GM10248 (cell line): ENCODE measurements at regions of chr14 and their contacts with region 1.

Region 1: DNA sequence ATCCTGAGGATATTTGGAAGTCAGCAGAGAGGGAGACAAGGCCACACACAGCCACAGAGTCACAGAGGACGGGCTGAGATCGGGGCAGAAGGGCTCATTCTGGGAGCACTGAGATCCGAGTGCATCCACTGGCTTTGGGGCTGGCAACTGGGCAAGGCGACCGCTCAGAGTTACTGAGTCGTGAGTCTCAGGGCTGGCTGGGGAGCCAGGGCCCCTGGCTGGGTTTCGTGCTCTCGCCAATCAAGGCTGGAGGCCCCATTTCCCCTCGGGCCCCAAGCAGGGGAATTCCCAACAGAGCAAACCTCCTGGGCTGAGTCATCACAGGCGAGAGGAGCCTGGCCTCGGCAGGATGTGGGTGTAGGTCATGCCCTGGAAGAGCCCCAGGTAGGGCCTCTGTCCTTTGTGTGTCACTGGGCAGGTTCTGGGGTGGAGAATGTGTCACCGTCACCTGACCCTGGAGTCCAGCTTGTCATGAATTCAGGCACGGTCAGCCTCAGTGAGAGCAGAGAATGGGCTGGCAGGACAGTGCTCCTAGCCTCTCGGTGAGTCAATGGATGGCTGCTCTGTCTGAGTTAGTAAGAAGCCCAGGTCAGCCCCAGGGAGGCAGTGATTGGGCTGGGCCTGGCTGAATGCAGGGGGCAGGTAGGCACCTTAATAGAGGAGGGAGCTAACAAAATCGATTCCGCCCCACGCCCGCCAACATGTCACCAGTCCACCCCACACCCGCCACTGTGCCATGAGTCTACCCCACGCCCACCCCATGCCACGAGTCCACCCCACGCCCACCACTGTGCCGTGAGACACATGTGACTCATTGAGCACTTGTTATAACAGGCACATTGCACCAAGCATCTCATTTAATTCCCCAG is 16.9 kb downstream of the ASB2 start:
- DNase-seq: peak; percentile 93
- CTCF ChIP-seq: no peak

Region 2: DNA sequence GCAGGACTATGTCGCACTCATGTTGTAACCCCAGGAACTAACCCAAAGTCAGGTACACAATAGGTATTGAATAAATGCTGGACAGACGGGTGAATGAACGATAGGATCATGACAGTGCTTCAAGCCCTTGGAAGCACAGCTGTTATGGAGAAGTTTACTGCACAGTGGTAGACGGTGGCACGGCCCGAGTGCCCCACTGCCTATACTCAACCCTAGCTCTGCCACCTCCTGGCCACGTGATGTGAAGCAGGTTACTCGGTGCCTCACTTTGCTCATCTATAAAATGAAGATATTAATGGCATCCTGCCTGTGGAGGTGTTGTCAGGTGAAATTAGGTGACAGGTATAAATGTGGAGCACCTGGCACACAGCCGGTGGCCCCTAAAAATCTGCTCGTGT is 11.1 kb after region 1 on chr14:
- CTCF ChIA-PET with region 1: interaction called, 48 read pairs
- POLR2A ChIA-PET with region 1: interaction called, 18 read pairs
- DNase-seq: no peak
- CTCF ChIP-seq: peak; percentile 69

Region 3: GRCh38 chr14:93975791-93976476 is 16.5 kb after region 1 on chr14:
- CTCF ChIA-PET with region 1: interaction called, 48 read pairs
- POLR2A ChIA-PET with region 1: interaction called, 18 read pairs
- DNase-seq: peak; percentile 80
- CTCF ChIP-seq: no peak

Region 4: DNA sequence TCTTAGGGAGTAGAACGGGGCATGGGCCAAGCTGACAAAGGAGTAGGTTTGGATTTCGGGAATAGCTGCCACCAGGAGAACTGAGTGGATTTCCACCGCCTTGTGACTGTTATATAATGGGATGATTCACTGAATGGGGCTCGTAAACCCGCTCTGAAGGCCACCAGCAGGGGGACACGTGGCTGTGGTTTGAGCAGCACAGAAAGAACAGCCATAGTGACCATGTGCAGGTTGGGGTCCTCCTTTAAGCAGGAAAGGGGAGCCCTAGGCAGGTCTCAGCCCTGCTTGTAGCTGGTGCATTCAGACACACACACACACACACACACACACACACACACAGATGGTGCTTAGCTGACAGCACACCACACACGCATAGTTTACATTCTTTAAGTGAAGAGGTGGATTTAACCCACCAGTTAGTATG is 25.5 kb after region 1 on chr14:
- CTCF ChIA-PET with region 1: interaction called, 10 read pairs
- POLR2A ChIA-PET with region 1: interaction called, 4 read pairs
- DNase-seq: no peak
- CTCF ChIP-seq: peak; percentile 29